GM12878 (cell line): ENCODE measurements at regions of chr5 and their contacts with region 1.

Region 1: GRCh38 chr5:13987843-13988464 is 43.5 kb upstream of the DNAH5 start:
- DNase-seq: no peak
- ATAC-seq: peak; percentile 84
- H3K4me3 ChIP-seq: no peak overlapping the region
- H3K27ac ChIP-seq: no peak overlapping the region
- H3K4me1 ChIP-seq: no peaks in the 10 kb centered on the region
- H3K27me3 ChIP-seq: peaks cover 0 to 2% of the 10 kb centered on the region in 2 experiments; a peak in 1 of 4 replicates
- CTCF ChIP-seq: peak; percentile 70 to 89 (median 83)
- EP300 ChIP-seq: no peak
- POLR2A ChIP-seq: no peak
- RAD21 ChIP-seq: peak; percentile 97

Region 2: GRCh38 chr5:13939638-13940037 is 48.3 kb before region 1 on chr5:
- CTCF ChIA-PET with region 1: no interaction called
- POLR2A ChIA-PET with region 1: no interaction called
- RAD21 ChIA-PET with region 1: no interaction called
- SMC1A ChIA-PET with region 1: no interaction called
- in situ Hi-C with region 1: no loop called
- intact Hi-C with region 1: no loop called
- DNase-seq: no peak
- ATAC-seq: no peak
- H3K4me3 ChIP-seq: no peak overlapping the region
- H3K27ac ChIP-seq: no peak overlapping the region
- H3K4me1 ChIP-seq: no peaks in the 10 kb centered on the region
- H3K27me3 ChIP-seq: no peaks in the 10 kb centered on the region; a peak in 1 of 4 replicates
- CTCF ChIP-seq: no peak
- EP300 ChIP-seq: no peak
- POLR2A ChIP-seq: no peak
- RAD21 ChIP-seq: no peak

Region 3: DNA sequence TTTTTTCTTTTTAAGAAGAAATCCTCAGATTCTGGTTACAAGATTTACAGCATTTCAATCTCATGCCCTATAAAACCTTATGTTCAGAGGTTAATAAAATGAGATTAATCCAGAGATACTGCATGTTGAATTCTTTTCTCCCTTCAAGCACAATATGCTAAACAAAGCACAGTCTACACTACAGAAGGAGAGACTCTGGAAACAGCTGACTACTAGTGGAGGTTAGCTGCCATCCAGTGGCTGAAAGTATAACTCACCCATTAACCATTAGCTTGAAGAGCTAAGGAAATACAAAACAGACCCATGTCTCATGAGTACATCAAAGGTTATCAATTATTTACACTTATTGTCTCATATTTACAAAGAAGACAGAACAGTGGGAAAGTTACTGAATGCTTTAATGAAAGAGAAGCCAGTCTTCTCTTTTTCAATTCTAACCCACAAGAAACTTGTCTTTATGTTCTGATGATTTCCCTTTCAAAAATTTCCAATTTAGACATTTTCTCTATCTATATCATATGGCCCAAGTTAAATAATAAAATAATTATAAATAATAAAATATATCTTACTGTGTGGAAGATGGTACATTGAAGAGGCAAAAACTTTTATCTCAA is 30.8 kb before region 1 on chr5:
- CTCF ChIA-PET with region 1: no interaction called
- POLR2A ChIA-PET with region 1: no interaction called
- RAD21 ChIA-PET with region 1: no interaction called
- SMC1A ChIA-PET with region 1: no interaction called
- in situ Hi-C with region 1: no loop called
- intact Hi-C with region 1: no loop called
- DNase-seq: no peak
- ATAC-seq: peak; percentile 94
- H3K4me3 ChIP-seq: no peak overlapping the region
- H3K27ac ChIP-seq: no peak overlapping the region
- H3K4me1 ChIP-seq: no peaks in the 10 kb centered on the region
- H3K27me3 ChIP-seq: no peaks in the 10 kb centered on the region
- CTCF ChIP-seq: peak; percentile 51 to 64 (median 52); a peak in 5 of 6 replicates
- EP300 ChIP-seq: no peak
- POLR2A ChIP-seq: no peak
- RAD21 ChIP-seq: peak; percentile 72

Region 4: GRCh38 chr5:14281746-14282181 is 293.8 kb after region 1 on chr5:
- CTCF ChIA-PET with region 1: no interaction called
- POLR2A ChIA-PET with region 1: no interaction called
- RAD21 ChIA-PET with region 1: no interaction called
- SMC1A ChIA-PET with region 1: interaction called, 8 read pairs
- in situ Hi-C with region 1: loop called (anchors 5 kb)
- intact Hi-C with region 1: no loop called
- DNase-seq: no peak
- ATAC-seq: peak; percentile 88
- H3K4me3 ChIP-seq: no peak overlapping the region
- H3K27ac ChIP-seq: no peak overlapping the region
- H3K4me1 ChIP-seq: peaks cover 14% of the 10 kb centered on the region
- H3K27me3 ChIP-seq: no peaks in the 10 kb centered on the region
- CTCF ChIP-seq: no peak
- EP300 ChIP-seq: peak in 1 of 2 experiments; percentile 47; a peak in 1 of 4 replicates
- POLR2A ChIP-seq: no peak
- RAD21 ChIP-seq: no peak